Caco-2 (cell line): ENCODE measurements at regions of chr5 and their contacts with region 1.

Region 1: DNA sequence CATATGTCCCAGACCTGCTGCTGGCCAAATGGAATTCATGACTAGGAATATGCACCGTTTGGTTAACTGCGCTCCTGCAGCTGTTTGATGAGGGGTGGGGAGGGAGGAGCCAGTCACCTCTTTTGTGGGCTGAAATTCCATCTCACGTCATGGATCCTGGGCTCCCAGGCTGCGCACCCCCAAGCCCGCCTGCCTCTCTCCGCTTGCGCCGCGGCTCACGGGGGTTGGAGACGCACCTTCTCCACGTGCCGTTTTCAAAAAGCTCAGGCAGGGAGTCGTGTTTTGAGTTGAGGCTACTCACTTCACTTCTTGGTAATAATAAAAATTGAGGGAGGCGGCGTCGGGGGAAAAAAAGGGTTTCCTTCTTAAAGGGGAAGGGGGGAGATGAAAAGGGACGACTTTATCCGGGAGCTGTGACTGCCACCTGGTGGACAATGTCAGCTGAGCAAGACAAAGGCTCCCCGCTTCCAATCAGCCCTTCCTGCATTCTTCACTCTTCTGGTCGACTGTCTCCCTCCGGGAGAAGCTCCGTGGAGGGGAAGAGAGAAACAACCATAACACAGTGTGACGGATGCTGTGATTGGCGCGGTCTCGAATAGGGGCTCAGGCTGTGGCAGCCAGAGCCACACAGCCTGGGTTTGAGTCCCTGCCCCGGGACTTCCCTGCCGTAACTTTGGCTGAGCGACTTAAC is 15.9 kb upstream of the C5orf47 start:
- DNase-seq: peak; percentile 87 to 89
- H3K4me3 ChIP-seq: peak overlapping the region; percentile 42
- H3K4me3 Mint-ChIP-seq: peak overlapping the region; percentile 74
- H3K27ac Mint-ChIP-seq: peak overlapping the region; percentile 80
- H3K4me1 ChIP-seq: peaks cover 56% of the 10 kb centered on the region
- H3K4me1 Mint-ChIP-seq: peaks cover 28% of the 10 kb centered on the region
- H3K27me3 ChIP-seq: no peaks in the 10 kb centered on the region
- H3K27me3 Mint-ChIP-seq: no peaks in the 10 kb centered on the region
- CTCF ChIP-seq: peak; percentile 88 to 89

Region 2: GRCh38 chr5:173764321-173765029 is 208.6 kb before region 1 on chr5:
- CTCF ChIA-PET with region 1: interaction called, 4 read pairs
- POLR2A ChIA-PET with region 1: interaction called, 3 read pairs
- intact Hi-C with region 1: loop called (anchors 1 kb)
- DNase-seq: peak; percentile 42 to 70
- H3K4me3 ChIP-seq: no peak overlapping the region
- H3K4me3 Mint-ChIP-seq: no peak overlapping the region
- H3K27ac Mint-ChIP-seq: no peak overlapping the region
- H3K4me1 ChIP-seq: peaks cover 40% of the 10 kb centered on the region
- H3K4me1 Mint-ChIP-seq: peaks cover 20% of the 10 kb centered on the region
- H3K27me3 ChIP-seq: no peaks in the 10 kb centered on the region
- H3K27me3 Mint-ChIP-seq: no peaks in the 10 kb centered on the region
- CTCF ChIP-seq: no peak

Region 3: DNA sequence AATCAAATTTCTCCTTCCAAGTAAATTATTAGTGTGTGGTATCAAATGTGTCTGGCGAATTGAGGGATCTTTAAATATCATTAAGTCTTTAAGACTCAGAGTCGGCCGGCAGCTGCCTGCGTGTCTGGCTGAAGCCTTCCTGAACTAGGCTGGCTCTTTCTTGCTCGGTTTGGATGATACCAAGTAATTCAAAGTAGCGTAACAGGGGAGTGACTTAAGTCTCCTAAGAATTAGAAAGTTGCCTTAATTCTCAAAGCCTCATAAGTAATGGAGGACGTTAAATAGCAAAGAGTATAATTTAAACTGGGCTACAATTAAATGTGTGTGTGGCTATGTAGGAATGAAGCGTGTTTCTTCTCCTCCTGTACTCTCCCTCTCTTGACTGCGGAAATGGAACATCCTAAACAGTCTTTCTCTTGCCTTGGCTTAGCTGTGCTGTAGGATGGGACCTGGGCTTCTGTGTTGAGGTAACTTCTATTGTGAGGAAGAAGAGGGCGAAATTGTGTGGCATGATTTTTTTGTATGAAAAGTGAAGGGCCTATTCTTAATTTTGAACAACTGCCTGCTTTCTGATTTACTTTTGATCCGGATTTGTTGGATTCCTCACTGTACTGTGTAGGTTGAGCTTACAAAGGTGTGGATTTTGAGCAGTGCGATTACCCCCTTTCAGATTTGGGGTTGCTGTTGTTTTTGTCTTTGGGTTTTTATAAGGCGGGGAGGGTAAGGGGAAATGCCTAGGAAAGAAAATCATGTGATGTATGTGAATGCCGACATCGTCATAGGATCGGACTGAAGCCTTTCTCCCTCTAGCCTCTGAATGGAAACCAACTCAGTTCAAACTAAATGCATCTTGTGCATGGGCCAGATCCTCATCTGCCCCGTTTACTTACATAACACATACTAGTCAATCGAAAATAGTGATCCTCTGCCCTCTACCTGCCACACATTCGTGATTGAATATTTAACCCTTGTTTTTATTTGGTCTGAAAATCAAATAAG is 55.0 kb before region 1 on chr5:
- CTCF ChIA-PET with region 1: no interaction called
- POLR2A ChIA-PET with region 1: no interaction called
- intact Hi-C with region 1: loop called (anchors 1 kb)
- DNase-seq: peak; percentile 68 to 74
- H3K4me3 ChIP-seq: peak overlapping the region; percentile 31
- H3K4me3 Mint-ChIP-seq: no peak overlapping the region
- H3K27ac Mint-ChIP-seq: no peak overlapping the region
- H3K4me1 ChIP-seq: peaks cover 12% of the 10 kb centered on the region
- H3K4me1 Mint-ChIP-seq: no peaks in the 10 kb centered on the region
- H3K27me3 ChIP-seq: no peaks in the 10 kb centered on the region
- H3K27me3 Mint-ChIP-seq: no peaks in the 10 kb centered on the region
- CTCF ChIP-seq: no peak

Region 4: DNA sequence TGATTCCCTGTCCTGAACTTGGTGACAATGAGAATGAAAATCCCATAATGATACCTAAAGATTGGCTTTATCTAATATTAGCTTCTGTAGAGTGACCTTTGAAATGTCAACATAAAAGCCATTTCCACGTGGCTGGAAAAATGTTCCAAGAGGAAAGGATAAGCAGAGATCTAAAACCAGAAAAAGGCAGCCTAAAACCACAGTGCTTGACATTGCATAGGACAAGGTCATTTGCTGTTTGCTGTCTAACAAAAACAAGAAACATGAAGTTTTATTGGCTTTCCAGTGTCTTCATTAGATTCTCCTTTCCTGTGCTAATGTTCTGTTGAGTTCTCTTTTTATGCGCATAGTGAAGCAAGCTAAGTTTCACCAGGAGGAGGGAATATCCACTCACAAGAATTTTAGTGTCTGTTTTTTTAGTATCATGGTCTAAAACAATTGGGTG is 40.4 kb before region 1 on chr5:
- CTCF ChIA-PET with region 1: interaction called, 6 read pairs
- POLR2A ChIA-PET with region 1: interaction called, 5 read pairs
- intact Hi-C with region 1: loop called (anchors 5 kb)
- DNase-seq: peak in 1 of 2 experiments; percentile 40
- H3K4me3 ChIP-seq: no peak overlapping the region
- H3K4me3 Mint-ChIP-seq: peak overlapping the region; percentile 49
- H3K27ac Mint-ChIP-seq: peak overlapping the region; percentile 70
- H3K4me1 ChIP-seq: peaks cover 49% of the 10 kb centered on the region
- H3K4me1 Mint-ChIP-seq: peaks cover 19% of the 10 kb centered on the region
- H3K27me3 ChIP-seq: no peaks in the 10 kb centered on the region
- H3K27me3 Mint-ChIP-seq: no peaks in the 10 kb centered on the region
- CTCF ChIP-seq: no peak

Region 5: DNA sequence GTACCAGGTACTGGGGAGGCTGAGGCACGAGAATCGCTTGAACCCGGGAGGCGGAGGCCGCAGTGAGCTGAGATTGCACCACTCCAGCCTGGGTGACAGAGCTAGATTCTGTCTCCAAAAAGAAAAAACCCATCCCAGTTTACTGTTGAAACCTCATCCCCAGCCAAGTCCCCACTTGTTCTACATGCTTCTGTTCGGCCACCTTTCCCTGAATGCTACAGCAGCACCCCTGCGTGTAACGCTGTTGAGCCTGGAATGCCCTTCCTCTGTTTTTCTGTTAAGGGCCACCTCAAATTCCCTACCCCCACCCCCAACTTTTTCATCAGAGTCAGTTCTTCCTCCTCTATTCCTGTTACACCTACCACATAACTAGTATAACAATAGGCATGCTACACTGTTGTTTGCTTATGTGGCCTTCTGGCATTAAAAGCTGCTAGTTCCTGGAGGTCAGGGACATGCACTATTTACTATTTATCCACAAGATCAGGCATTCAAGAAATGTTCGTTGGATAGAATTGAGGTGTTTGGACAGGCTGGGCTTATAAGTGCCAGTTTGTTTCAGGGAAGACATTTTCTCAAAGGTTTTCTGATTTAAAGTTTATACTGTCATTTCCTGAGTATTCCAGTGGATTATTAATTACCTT is 31.2 kb before region 1 on chr5:
- CTCF ChIA-PET with region 1: interaction called, 6 read pairs
- POLR2A ChIA-PET with region 1: interaction called, 6 read pairs
- intact Hi-C with region 1: loop called (anchors 1 kb)
- DNase-seq: no peak
- H3K4me3 ChIP-seq: no peak overlapping the region
- H3K4me3 Mint-ChIP-seq: no peak overlapping the region
- H3K27ac Mint-ChIP-seq: peak overlapping the region; percentile 57
- H3K4me1 ChIP-seq: peaks cover 67% of the 10 kb centered on the region
- H3K4me1 Mint-ChIP-seq: peaks cover 49% of the 10 kb centered on the region
- H3K27me3 ChIP-seq: no peaks in the 10 kb centered on the region
- H3K27me3 Mint-ChIP-seq: no peaks in the 10 kb centered on the region
- CTCF ChIP-seq: no peak